ENCODE measurements at regions of chr5 and their contacts with region 1.

Region 1: GRCh38 chr5:132369474-132370180 is at the start of gene SLC22A5:
- DNase-seq: peak; percentile 56 to 83 (median 75)
- ATAC-seq: peak; percentile 62 to 91 (median 82)
- H3K4me3 ChIP-seq: peak within 1 kb of the TSS; percentile 66 to 90 (median 78)
- H3K27ac ChIP-seq: peak within 1 kb of the TSS; percentile 64 to 94 (median 88)
- H3K4me1 ChIP-seq: peaks cover 0 to 42% (median 22%) of the 10 kb centered on the region in 12 donors
- H3K27me3 ChIP-seq: no peaks in the 10 kb centered on the region
- CTCF ChIP-seq: no peak
- POLR2A ChIP-seq: peak in 1 of 2 donors; percentile 50
- total RNA-seq, gene SLC22A5: 7.5 to 42.5 (median 13.5) TPM

Region 2: GRCh38 chr5:132073231-132074013 is 296.2 kb before region 1 on chr5 and contains the start of gene CSF2:
- intact Hi-C with region 1: no loop called
- DNase-seq: peak in 1 of 5 donors; percentile 53
- ATAC-seq: no peak
- H3K4me3 ChIP-seq: no peak within 1 kb of the TSS
- H3K27ac ChIP-seq: no peak within 1 kb of the TSS
- H3K4me1 ChIP-seq: peaks cover 0 to 6% (median 0%) of the 10 kb centered on the region in 12 donors
- H3K27me3 ChIP-seq: no peaks in the 10 kb centered on the region
- CTCF ChIP-seq: no peak
- POLR2A ChIP-seq: no peak
- total RNA-seq, gene CSF2: 0.67 TPM in 1 of 9 donors, not detected in the others

Region 3: DNA sequence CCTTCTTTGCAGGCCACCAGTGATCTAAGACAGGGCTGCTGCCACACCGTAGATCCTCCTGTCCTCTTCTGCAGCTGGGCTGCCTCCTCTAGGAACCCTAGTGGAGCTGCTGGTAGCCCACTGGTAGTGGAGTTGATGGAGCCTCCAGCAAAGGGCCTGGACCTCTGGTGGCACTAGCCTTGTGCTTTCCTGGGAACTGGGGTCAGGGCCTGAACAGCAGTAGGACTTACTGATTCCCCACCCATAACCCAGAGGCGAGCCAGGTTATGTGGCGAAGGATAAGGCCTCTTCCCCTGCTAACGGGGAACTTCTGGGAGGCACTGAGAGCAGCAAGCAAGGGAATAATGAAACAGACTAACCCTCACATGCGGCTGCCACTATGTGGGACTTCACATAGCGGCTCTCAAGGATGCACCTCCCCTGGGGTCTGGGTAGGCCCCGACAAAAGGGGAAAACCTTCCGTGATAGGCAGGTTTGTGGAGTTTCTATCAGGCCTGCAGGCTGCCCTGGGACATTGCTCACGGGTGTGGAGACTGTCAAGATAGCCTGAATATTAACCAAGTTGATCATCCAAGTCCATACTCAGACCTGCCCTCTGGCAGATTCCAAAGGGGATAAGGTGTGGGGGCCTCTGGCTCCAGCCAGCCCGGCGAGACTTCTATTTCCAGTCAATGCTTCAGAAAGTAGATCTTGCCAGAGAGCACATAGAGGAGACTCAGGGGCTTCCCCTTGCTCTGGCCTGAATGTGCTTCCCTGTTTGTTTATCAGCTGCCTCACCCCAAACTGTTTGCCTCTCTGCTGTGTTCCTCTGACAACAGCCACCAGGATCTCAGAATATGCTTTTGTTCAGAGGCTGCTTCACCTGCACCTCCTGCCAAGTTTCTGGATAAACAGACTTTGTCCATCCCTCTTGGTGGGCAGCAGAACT is 68.0 kb before region 1 on chr5:
- intact Hi-C with region 1: loop called in 3 of 10 experiments (anchors 5 to 10 kb)
- DNase-seq: peak in 1 of 5 donors; percentile 44
- ATAC-seq: peak; percentile 63 to 86 (median 77)
- H3K4me3 ChIP-seq: no peak overlapping the region
- H3K27ac ChIP-seq: peak overlapping the region in 11 of 12 donors; percentile 24 to 81 (median 66)
- H3K4me1 ChIP-seq: peaks cover 0 to 45% (median 19%) of the 10 kb centered on the region in 12 donors
- H3K27me3 ChIP-seq: no peaks in the 10 kb centered on the region
- CTCF ChIP-seq: no peak
- POLR2A ChIP-seq: no peak